H1 (cell line): ENCODE measurements at regions of chr7 and their contacts with region 1.

Region 1: GRCh38 chr7:15720849-15721471 is 34.5 kb upstream of the MEOX2 start:
- DNase-seq: peak in 1 of 2 experiments; percentile 50
- H3K4me3 ChIP-seq: no peak overlapping the region
- H3K27ac ChIP-seq: no peak overlapping the region
- H3K4me1 ChIP-seq: peaks cover 0 to 5% (median 0%) of the 10 kb centered on the region in 4 experiments; a peak in 1 of 7 replicates
- H3K27me3 ChIP-seq: no peaks in the 10 kb centered on the region
- CTCF ChIP-seq: peak in 2 of 3 experiments; percentile 41 to 57; a peak in 2 of 4 replicates
- EP300 ChIP-seq: no peak
- POLR2A ChIP-seq: no peak
- RAD21 ChIP-seq: peak; percentile 66 to 69

Region 2: GRCh38 chr7:15389073-15389472 is 331.9 kb before region 1 on chr7:
- CTCF ChIA-PET with region 1: no interaction called
- POLR2A ChIA-PET with region 1: no interaction called
- DNase-seq: no peak
- H3K4me3 ChIP-seq: no peak overlapping the region
- H3K27ac ChIP-seq: no peak overlapping the region
- H3K4me1 ChIP-seq: no peaks in the 10 kb centered on the region
- H3K27me3 ChIP-seq: no peaks in the 10 kb centered on the region
- CTCF ChIP-seq: no peak
- EP300 ChIP-seq: no peak
- POLR2A ChIP-seq: no peak
- RAD21 ChIP-seq: no peak

Region 3: DNA sequence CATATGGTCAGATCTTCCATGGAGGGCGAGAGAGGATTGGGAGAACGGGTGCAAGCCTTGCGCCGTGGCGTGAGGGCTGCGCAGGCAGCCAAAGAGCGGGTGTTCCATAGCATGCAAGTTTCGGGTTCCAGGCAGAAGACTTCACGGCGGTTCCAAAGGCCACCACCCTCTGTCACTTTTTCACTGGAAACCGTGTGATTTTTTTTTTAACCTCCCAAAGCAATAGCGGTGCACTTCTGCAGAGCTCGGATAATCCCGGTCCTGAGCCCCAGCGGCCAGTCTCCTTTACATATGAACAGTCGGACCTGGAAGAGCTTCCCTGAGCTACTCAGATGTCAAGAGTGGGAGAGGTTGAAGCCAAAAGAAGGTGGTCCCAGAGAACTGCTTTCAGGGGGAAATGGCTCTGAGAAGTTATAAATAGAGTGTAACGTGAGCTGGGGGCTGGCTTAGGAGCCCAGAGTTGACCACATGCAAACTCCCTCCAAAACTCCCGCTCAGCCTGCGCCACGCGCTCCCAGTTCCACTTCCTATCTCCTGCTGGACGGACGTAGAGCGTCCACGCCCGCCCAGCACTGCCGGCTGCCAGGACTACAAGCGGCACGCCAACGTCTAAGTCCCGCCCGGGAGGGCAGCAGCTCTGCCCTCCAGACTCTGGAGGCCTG is 34.5 kb before region 1 on chr7 and contains the start of gene MEOX2:
- CTCF ChIA-PET with region 1: interaction called, 12 read pairs
- POLR2A ChIA-PET with region 1: no interaction called
- DNase-seq: peak in 1 of 2 experiments; percentile 63
- H3K4me3 ChIP-seq: peak within 1 kb of the TSS; percentile 28 to 67 (median 41)
- H3K27ac ChIP-seq: no peak within 1 kb of the TSS
- H3K4me1 ChIP-seq: peaks cover 0 to 25% (median 9%) of the 10 kb centered on the region in 4 experiments; a peak in 6 of 7 replicates
- H3K27me3 ChIP-seq: peaks cover 22 to 50% (median 43%) of the 10 kb centered on the region in 4 experiments
- CTCF ChIP-seq: no peak
- EP300 ChIP-seq: no peak
- POLR2A ChIP-seq: no peak
- RAD21 ChIP-seq: no peak
- total RNA-seq, gene MEOX2: 0.19 TPM in 1 of 2 replicates, not detected in the other

Region 4: GRCh38 chr7:15692501-15693020 is 28.4 kb before region 1 on chr7:
- CTCF ChIA-PET with region 1: interaction called, 12 read pairs
- POLR2A ChIA-PET with region 1: no interaction called
- DNase-seq: no peak
- H3K4me3 ChIP-seq: no peak overlapping the region
- H3K27ac ChIP-seq: no peak overlapping the region
- H3K4me1 ChIP-seq: peaks cover 0 to 10% (median 0%) of the 10 kb centered on the region in 4 experiments; a peak in 4 of 7 replicates
- H3K27me3 ChIP-seq: peaks cover 7 to 16% (median 12%) of the 10 kb centered on the region in 4 experiments
- CTCF ChIP-seq: no peak
- EP300 ChIP-seq: no peak
- POLR2A ChIP-seq: no peak
- RAD21 ChIP-seq: no peak

Region 5: GRCh38 chr7:15709978-15710377 is 11.0 kb before region 1 on chr7:
- CTCF ChIA-PET with region 1: interaction called, 10 read pairs
- POLR2A ChIA-PET with region 1: no interaction called
- DNase-seq: no peak
- H3K4me3 ChIP-seq: no peak overlapping the region
- H3K27ac ChIP-seq: no peak overlapping the region
- H3K4me1 ChIP-seq: no peaks in the 10 kb centered on the region
- H3K27me3 ChIP-seq: no peaks in the 10 kb centered on the region
- CTCF ChIP-seq: no peak
- EP300 ChIP-seq: no peak
- POLR2A ChIP-seq: no peak
- RAD21 ChIP-seq: no peak

Region 6: GRCh38 chr7:15737601-15738000 is 16.6 kb after region 1 on chr7:
- CTCF ChIA-PET with region 1: interaction called, 13 read pairs
- POLR2A ChIA-PET with region 1: no interaction called
- DNase-seq: no peak
- H3K4me3 ChIP-seq: no peak overlapping the region
- H3K27ac ChIP-seq: no peak overlapping the region
- H3K4me1 ChIP-seq: 0 out of 7 replicates have a peak, but pooled peaks cover 0 to 3% (median 0%) of the 10 kb centered on the region in 4 experiments
- H3K27me3 ChIP-seq: no peaks in the 10 kb centered on the region
- CTCF ChIP-seq: no peak
- EP300 ChIP-seq: no peak
- POLR2A ChIP-seq: no peak
- RAD21 ChIP-seq: no peak